ENCODE measurements at regions of chrX and their contacts with region 1.

Region 1: GRCh38 chrX:56978172-56978571 is 17.2 kb downstream of the SPIN3 start:
- DNase-seq: peak; percentile 58
- ATAC-seq: peak; percentile 73
- H3K4me3 Mint-ChIP-seq: no peak overlapping the region
- H3K27ac Mint-ChIP-seq: no peak overlapping the region
- H3K4me1 Mint-ChIP-seq: peaks cover 3% of the 10 kb centered on the region
- H3K27me3 Mint-ChIP-seq: no peaks in the 10 kb centered on the region

Region 2: GRCh38 chrX:56764153-56764974 is 213.8 kb before region 1 on chrX:
- CTCF ChIA-PET with region 1: interaction called, 19 read pairs
- DNase-seq: peak; percentile 75
- ATAC-seq: peak; percentile 77
- H3K4me3 Mint-ChIP-seq: peak overlapping the region; percentile 63
- H3K27ac Mint-ChIP-seq: peak overlapping the region; percentile 94
- H3K4me1 Mint-ChIP-seq: peaks cover 50% of the 10 kb centered on the region
- H3K27me3 Mint-ChIP-seq: no peaks in the 10 kb centered on the region